CD8-positive, alpha-beta memory T cell (primary cell): ENCODE measurements at regions of chr3 and their contacts with region 1.

Region 1: DNA sequence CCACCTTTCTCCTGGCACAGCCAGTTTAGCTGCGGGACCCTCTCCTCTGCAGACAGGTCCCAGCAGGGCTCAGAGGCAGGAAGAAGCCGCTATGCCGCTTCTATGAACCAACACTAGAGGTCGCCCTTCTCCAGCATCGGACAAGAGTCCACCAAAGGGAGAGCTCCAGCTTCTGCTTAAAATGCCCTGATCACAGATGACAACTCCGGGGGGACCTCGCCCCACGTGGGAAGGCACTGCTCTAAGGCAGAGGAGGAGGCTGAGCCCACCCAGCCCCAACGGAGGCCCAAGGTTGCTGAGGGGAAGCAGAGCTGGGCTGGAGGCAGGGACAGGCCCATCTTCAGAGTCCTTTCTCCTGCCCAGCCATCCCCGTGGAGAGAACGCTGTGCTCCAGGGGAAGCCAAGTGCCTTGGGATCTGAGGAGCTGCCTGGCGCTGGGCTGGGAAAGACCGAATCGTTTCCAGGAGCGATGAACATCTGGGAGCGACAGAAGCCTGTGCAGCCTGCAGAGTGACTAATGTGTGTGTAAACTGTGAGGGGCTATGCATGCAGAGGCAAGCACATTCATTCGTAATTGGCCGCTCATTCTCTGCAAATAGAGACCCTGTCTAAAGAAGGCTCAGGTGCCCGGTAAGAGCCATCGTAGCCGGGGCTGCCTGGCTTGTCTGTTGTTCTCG is 43.5 kb upstream of the BDH1 start:
- DNase-seq: peak; percentile 59 to 83 (median 70)
- H3K4me3 ChIP-seq: no peak overlapping the region
- H3K4me3 Mint-ChIP-seq: no peak overlapping the region
- H3K27ac ChIP-seq: no peak overlapping the region
- H3K27ac Mint-ChIP-seq: no peak overlapping the region
- H3K4me1 ChIP-seq: peaks cover 3% of the 10 kb centered on the region
- H3K4me1 Mint-ChIP-seq: peaks cover 3 to 5% (median 4%) of the 10 kb centered on the region in 3 donors
- H3K27me3 ChIP-seq: no peaks in the 10 kb centered on the region
- H3K27me3 Mint-ChIP-seq: no peaks in the 10 kb centered on the region

Region 2: GRCh38 chr3:197554562-197555280 is 44.5 kb before region 1 on chr3:
- CTCF ChIA-PET with region 1: no interaction called
- POLR2A ChIA-PET with region 1: no interaction called
- DNase-seq: peak; percentile 82 to 91 (median 86)
- H3K4me3 ChIP-seq: peak overlapping the region; percentile 83
- H3K4me3 Mint-ChIP-seq: peak overlapping the region; percentile 90 to 95 (median 93)
- H3K27ac ChIP-seq: peak overlapping the region; percentile 81
- H3K27ac Mint-ChIP-seq: peak overlapping the region; percentile 75 to 98 (median 91)
- H3K4me1 ChIP-seq: peaks cover 10% of the 10 kb centered on the region
- H3K4me1 Mint-ChIP-seq: peaks cover 13 to 20% (median 20%) of the 10 kb centered on the region in 3 donors
- H3K27me3 ChIP-seq: peaks cover 6% of the 10 kb centered on the region
- H3K27me3 Mint-ChIP-seq: peaks cover 16 to 19% of the 10 kb centered on the region in 2 donors

Region 3: DNA sequence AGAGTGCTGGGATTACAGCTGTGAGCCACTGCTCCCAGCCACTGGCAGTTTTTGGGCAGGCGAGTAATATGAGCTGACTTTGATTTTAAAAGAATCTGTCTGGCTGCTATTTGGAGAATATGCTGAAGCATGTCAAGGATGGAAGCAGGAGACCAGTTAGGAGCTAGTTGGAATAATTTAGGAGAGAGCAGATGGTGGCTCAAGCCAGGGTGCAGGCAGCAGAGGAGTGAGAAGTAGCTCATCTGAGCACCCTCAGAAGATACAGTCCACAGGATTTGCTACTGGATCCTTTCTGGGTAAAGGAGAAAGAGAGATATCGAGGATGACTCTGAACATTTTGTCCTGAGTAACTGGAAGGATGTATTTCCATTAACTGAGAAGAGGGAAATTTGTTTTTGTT is 13.0 kb before region 1 on chr3:
- CTCF ChIA-PET with region 1: interaction called, 16 read pairs
- POLR2A ChIA-PET with region 1: no interaction called
- DNase-seq: no peak
- H3K4me3 ChIP-seq: no peak overlapping the region
- H3K4me3 Mint-ChIP-seq: no peak overlapping the region
- H3K27ac ChIP-seq: no peak overlapping the region
- H3K27ac Mint-ChIP-seq: peak overlapping the region in 1 of 8 donors; percentile 60
- H3K4me1 ChIP-seq: no peaks in the 10 kb centered on the region
- H3K4me1 Mint-ChIP-seq: no peaks in the 10 kb centered on the region
- H3K27me3 ChIP-seq: no peaks in the 10 kb centered on the region
- H3K27me3 Mint-ChIP-seq: peaks cover 2 to 3% of the 10 kb centered on the region in 2 donors

Region 4: GRCh38 chr3:197613199-197613598 is 14.0 kb after region 1 on chr3:
- CTCF ChIA-PET with region 1: interaction called, 39 read pairs
- POLR2A ChIA-PET with region 1: interaction called, 9 read pairs
- DNase-seq: peak in 2 of 5 donors; percentile 66 to 82
- H3K4me3 ChIP-seq: no peak overlapping the region
- H3K4me3 Mint-ChIP-seq: peak overlapping the region; percentile 1 to 66 (median 57)
- H3K27ac ChIP-seq: no peak overlapping the region
- H3K27ac Mint-ChIP-seq: peak overlapping the region; percentile 74 to 96 (median 90)
- H3K4me1 ChIP-seq: peaks cover 15% of the 10 kb centered on the region
- H3K4me1 Mint-ChIP-seq: peaks cover 21 to 24% (median 21%) of the 10 kb centered on the region in 3 donors
- H3K27me3 ChIP-seq: no peaks in the 10 kb centered on the region
- H3K27me3 Mint-ChIP-seq: no peaks in the 10 kb centered on the region

Region 5: GRCh38 chr3:197673170-197673569 is 73.9 kb after region 1 on chr3:
- CTCF ChIA-PET with region 1: interaction called, 17 read pairs
- POLR2A ChIA-PET with region 1: no interaction called
- DNase-seq: no peak
- H3K4me3 ChIP-seq: no peak overlapping the region
- H3K4me3 Mint-ChIP-seq: no peak overlapping the region
- H3K27ac ChIP-seq: no peak overlapping the region
- H3K27ac Mint-ChIP-seq: peak overlapping the region in 4 of 8 donors; percentile 6 to 52 (median 36)
- H3K4me1 ChIP-seq: no peaks in the 10 kb centered on the region
- H3K4me1 Mint-ChIP-seq: no peaks in the 10 kb centered on the region
- H3K27me3 ChIP-seq: no peaks in the 10 kb centered on the region
- H3K27me3 Mint-ChIP-seq: peaks cover 0 to 1% of the 10 kb centered on the region in 2 donors